ENCODE measurements at regions of chr4 and their contacts with region 1.

Region 1: DNA sequence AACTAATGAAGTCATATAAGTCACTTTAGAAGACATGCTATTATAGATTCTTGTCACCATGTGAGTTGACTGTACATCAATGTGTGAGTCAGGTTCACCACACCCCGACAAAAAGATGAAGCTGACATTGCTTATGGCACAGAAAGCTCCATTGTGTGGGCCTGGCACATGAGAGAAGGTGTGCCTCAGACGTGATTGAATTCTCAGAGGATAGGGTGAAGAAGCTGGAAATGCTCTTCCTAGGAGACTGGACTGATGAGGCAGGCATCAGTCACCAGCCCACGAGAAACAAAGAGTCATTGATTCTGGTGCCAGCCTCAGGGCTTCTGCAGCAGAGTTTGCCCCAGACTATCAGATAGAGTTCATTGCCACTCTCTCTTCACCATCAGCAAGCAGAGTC is 35.9 kb upstream of the LRAT start:
- DNase-seq: peak; percentile 86
- ATAC-seq: peak; percentile 99
- H3K4me3 ChIP-seq: no peak overlapping the region
- H3K27ac ChIP-seq: peak overlapping the region; percentile 76
- H3K4me1 ChIP-seq: peaks cover 11% of the 10 kb centered on the region
- H3K27me3 ChIP-seq: no peaks in the 10 kb centered on the region
- CTCF ChIP-seq: no peak

Region 2: DNA sequence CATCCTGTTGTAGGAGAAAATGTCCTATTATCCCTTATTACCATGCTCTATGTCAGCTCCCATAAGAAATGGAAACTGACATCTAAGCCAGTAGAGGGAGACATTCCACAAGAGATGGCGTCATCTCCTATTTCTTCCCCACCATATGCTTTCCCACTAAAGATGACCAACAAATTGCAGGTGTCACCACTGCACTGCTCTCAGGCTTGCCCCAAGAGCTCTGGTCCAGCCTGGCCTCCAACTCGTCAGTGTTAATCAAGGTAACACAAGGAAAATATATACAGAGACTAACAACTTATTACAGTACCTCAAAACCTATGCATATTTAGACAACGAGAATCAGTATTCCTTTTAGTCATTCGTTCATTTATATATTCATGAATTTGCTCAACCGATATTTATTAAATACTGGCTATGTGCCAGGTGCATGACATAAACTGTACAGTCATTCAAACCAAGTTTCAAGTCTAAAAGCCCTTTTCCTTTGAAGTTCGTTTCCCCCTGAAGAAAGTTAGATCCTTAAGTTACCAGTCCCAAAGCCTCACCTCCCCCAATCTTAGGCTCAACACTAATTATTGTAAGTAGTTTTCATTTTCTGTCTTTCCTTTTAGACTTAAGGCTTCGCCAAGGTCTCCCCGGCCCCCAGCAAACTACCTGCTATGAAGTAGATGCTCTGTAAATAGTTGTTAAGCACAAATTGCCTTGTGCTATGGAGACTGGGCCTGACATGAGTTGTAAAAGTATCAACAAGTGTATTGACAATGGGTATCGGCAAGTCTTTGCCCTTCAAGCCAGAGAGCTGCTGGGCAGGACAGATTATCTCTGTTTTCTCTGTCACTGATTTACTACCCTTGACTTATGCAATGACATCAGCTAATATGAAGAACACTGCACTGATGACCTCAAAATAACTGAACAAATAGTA is 148.1 kb before region 1 on chr4:
- CTCF ChIA-PET with region 1: no interaction called
- POLR2A ChIA-PET with region 1: no interaction called
- intact Hi-C with region 1: no loop called
- DNase-seq: peak; percentile 78
- ATAC-seq: peak; percentile 81
- H3K4me3 ChIP-seq: no peak overlapping the region
- H3K27ac ChIP-seq: peak overlapping the region; percentile 22; the same call in 1 of the 2 replicates
- H3K4me1 ChIP-seq: peaks cover 44% of the 10 kb centered on the region
- H3K27me3 ChIP-seq: no peaks in the 10 kb centered on the region
- CTCF ChIP-seq: peak; percentile 86

Region 3: DNA sequence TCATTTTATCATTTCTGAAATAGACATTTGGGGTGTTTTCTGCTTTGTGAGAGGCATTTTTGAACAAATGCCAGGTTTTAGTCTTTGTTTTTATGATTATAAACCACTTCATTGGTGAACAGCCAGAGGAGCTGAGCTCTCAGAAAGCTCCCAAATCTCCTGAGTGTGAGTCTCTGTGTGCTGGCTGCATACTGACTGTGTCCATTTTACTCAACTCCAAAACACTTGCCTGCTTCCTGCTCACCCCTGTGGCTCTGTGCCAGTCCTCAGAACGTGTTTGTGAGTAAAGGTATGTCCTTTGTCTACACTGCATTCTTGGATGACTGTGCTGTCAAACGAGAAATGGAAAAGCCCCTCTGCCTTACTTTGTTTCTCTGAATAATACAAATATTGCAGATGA is 30.5 kb after region 1 on chr4:
- CTCF ChIA-PET with region 1: no interaction called
- POLR2A ChIA-PET with region 1: interaction called, 3 read pairs
- intact Hi-C with region 1: loop called (anchors 1 kb)
- DNase-seq: peak; percentile 86
- ATAC-seq: peak; percentile 83
- H3K4me3 ChIP-seq: no peak overlapping the region
- H3K27ac ChIP-seq: peak overlapping the region; percentile 57
- H3K4me1 ChIP-seq: peaks cover 22% of the 10 kb centered on the region
- H3K27me3 ChIP-seq: no peaks in the 10 kb centered on the region
- CTCF ChIP-seq: no peak

Measured in PC-3 (cell line).